ENCODE measurements at regions of chr1 and their contacts with region 1.

Region 1: GRCh38 chr1:10796019-10796944 is at the start of gene CASZ1:
- DNase-seq: peak; percentile 67 to 89
- H3K4me3 ChIP-seq: peak within 1 kb of the TSS; percentile 78
- H3K27ac ChIP-seq: no peak within 1 kb of the TSS
- H3K4me1 ChIP-seq: peaks cover 17% of the 10 kb centered on the region
- H3K27me3 ChIP-seq: no peaks in the 10 kb centered on the region
- CTCF ChIP-seq: no peak
- total RNA-seq, gene CASZ1: 15.2 and 18.9 TPM in 2 replicates

Region 2: GRCh38 chr1:10514490-10515235 is 281.6 kb before region 1 on chr1:
- CTCF ChIA-PET with region 1: interaction called, 15 read pairs
- POLR2A ChIA-PET with region 1: no interaction called
- intact Hi-C with region 1: no loop called
- DNase-seq: no peak
- H3K4me3 ChIP-seq: no peak overlapping the region
- H3K27ac ChIP-seq: no peak overlapping the region
- H3K4me1 ChIP-seq: peaks cover 38% of the 10 kb centered on the region
- H3K27me3 ChIP-seq: no peaks in the 10 kb centered on the region
- CTCF ChIP-seq: peak; percentile 52

Region 3: DNA sequence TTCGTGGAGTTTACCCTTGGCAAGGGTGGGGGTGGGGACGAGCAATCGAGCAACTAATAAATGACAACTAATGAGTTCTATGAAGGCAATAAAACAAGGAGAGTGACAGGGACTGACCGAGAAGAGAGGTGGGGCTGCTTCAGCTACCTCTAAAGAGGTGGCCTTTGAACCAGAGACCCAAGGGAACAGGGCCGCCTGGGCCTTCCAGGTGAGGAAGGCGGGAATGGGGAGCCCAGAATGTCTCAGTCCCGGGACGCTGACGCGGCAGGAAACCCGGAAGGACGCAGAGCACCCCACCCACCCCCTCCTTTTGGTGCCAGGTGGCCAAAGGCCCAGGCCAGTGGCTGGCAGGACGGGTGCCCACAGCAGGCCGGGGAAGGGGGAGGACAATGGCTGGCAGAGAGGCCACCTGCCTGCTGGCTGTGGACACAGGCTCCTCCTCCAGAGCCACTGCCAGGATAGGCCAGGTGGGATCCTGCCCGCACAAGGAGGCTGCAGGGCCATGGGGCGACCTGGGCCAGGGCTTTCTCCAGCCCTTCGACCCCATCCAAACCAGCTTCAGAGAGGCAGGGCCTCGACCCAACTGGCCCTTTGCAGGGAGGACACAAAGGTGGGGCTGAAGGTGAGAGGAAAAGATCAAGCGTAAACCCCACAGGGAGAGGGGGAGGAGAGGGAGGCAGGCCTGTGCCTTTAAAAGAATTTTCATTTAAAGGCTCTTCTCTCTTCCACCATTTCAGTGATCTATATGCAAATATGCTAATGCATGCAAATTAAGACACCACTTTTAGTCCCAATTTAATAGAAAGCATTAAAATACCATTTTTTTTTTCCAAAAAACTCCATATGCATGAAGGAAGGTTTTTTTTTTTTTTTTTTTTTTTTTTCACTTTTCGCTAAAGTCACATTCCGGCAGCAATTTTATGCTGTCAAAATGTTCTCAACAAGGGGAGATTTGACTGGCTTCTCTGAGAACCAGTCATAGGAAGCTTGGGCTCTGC is 57.9 kb before region 1 on chr1:
- CTCF ChIA-PET with region 1: interaction called, 11 read pairs
- POLR2A ChIA-PET with region 1: no interaction called
- intact Hi-C with region 1: no loop called
- DNase-seq: no peak
- H3K4me3 ChIP-seq: no peak overlapping the region
- H3K27ac ChIP-seq: no peak overlapping the region
- H3K4me1 ChIP-seq: no peaks in the 10 kb centered on the region
- H3K27me3 ChIP-seq: no peaks in the 10 kb centered on the region
- CTCF ChIP-seq: no peak

Region 4: GRCh38 chr1:10830961-10831669 is 34.8 kb after region 1 on chr1:
- CTCF ChIA-PET with region 1: no interaction called
- POLR2A ChIA-PET with region 1: no interaction called
- intact Hi-C with region 1: loop called (anchors 5 kb)
- DNase-seq: peak; percentile 52 to 63
- H3K4me3 ChIP-seq: no peak overlapping the region
- H3K27ac ChIP-seq: no peak overlapping the region
- H3K4me1 ChIP-seq: peaks cover 23% of the 10 kb centered on the region
- H3K27me3 ChIP-seq: no peaks in the 10 kb centered on the region
- CTCF ChIP-seq: no peak

Region 5: GRCh38 chr1:10901086-10901890 is 105.0 kb after region 1 on chr1:
- CTCF ChIA-PET with region 1: no interaction called
- POLR2A ChIA-PET with region 1: no interaction called
- intact Hi-C with region 1: loop called (anchors 2 kb)
- DNase-seq: peak; percentile 71 to 82
- H3K4me3 ChIP-seq: peak overlapping the region; percentile 43; the same call in 1 of the 2 replicates
- H3K27ac ChIP-seq: peak overlapping the region; percentile 100
- H3K4me1 ChIP-seq: peaks cover 57% of the 10 kb centered on the region
- H3K27me3 ChIP-seq: no peaks in the 10 kb centered on the region
- CTCF ChIP-seq: no peak

Measured in PC-9 (cell line).